GM12878 (cell line): ENCODE measurements at regions of chr10 and their contacts with region 1.

Region 1: GRCh38 chr10:77173615-77174461 is 463.8 kb downstream of the KCNMA1 start:
- DNase-seq: peak; percentile 28
- ATAC-seq: peak; percentile 84
- H3K4me3 ChIP-seq: no peak overlapping the region
- H3K27ac ChIP-seq: no peak overlapping the region
- H3K4me1 ChIP-seq: no peaks in the 10 kb centered on the region
- H3K27me3 ChIP-seq: no peaks in the 10 kb centered on the region
- CTCF ChIP-seq: peak; percentile 80 to 96 (median 81); a peak in 5 of 6 replicates
- EP300 ChIP-seq: no peak
- POLR2A ChIP-seq: no peak
- RAD21 ChIP-seq: peak; percentile 96

Region 2: DNA sequence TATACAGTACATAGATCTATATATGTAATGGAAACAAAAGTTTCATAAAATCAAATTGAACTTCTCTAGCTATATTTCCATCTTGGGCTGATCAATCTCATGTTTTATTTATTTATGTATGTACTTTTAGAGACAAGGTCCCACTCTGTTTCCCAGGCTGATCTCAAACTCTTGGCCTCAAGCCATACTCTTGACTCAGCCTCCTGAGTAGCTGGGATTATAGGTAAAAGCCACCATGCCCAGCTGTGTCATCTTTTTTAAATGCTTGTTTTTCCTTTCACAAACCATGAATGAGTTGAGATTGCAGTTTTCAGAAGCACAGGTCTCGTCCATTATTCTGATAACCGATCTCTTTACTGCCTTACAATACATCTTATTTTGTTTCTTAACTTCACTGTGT is 62.9 kb after region 1 on chr10:
- CTCF ChIA-PET with region 1: interaction called, 66 read pairs
- POLR2A ChIA-PET with region 1: no interaction called
- RAD21 ChIA-PET with region 1: interaction called, 44 read pairs
- SMC1A ChIA-PET with region 1: interaction called, 27 read pairs
- in situ Hi-C with region 1: no loop called
- intact Hi-C with region 1: no loop called
- DNase-seq: no peak
- ATAC-seq: no peak
- H3K4me3 ChIP-seq: no peak overlapping the region
- H3K27ac ChIP-seq: no peak overlapping the region
- H3K4me1 ChIP-seq: no peaks in the 10 kb centered on the region
- H3K27me3 ChIP-seq: no peaks in the 10 kb centered on the region
- CTCF ChIP-seq: no peak
- EP300 ChIP-seq: no peak
- POLR2A ChIP-seq: no peak
- RAD21 ChIP-seq: no peak

Region 3: GRCh38 chr10:77251297-77252013 is 77.6 kb after region 1 on chr10:
- CTCF ChIA-PET with region 1: interaction called, 27 read pairs
- POLR2A ChIA-PET with region 1: no interaction called
- RAD21 ChIA-PET with region 1: interaction called, 44 read pairs
- SMC1A ChIA-PET with region 1: interaction called, 106 read pairs
- in situ Hi-C with region 1: no loop called
- intact Hi-C with region 1: no loop called
- DNase-seq: no peak
- ATAC-seq: peak; percentile 94
- H3K4me3 ChIP-seq: no peak overlapping the region
- H3K27ac ChIP-seq: no peak overlapping the region
- H3K4me1 ChIP-seq: no peaks in the 10 kb centered on the region
- H3K27me3 ChIP-seq: no peaks in the 10 kb centered on the region
- CTCF ChIP-seq: peak; percentile 59 to 76 (median 64)
- EP300 ChIP-seq: no peak
- POLR2A ChIP-seq: no peak
- RAD21 ChIP-seq: peak; percentile 66

Region 4: DNA sequence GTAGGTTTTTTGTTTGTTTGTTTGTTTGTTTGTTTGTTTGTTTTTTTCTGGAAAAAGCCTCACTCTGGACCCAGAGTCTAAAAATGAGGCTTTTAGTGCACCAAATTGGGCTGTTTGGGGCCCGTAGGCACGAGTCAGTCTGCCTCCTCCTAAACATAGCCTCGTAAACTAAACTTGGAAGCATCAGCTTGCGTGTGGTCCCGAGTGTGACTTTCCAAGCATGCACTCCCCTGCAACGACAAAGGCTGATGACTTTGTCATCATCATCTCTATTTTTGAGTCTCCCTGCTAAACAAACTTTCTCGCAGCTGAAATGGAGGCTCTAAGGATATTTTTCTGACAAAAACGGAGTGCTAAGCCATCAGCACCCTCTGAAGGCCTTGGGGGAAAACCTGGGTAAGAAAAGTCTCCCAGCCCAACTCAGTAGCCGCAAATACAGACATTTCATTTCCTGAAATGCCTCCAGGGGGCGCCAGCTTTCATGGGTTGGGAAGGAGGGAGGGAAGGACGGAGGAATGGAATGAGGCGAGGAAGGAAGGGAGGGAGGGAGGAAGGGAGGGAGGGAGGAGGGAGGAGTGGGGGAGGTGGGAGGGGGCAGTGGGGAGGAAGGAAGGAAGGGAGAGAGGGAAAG is 217.9 kb after region 1 on chr10:
- CTCF ChIA-PET with region 1: interaction called, 53 read pairs
- POLR2A ChIA-PET with region 1: no interaction called
- RAD21 ChIA-PET with region 1: interaction called, 10 read pairs
- SMC1A ChIA-PET with region 1: interaction called, 50 read pairs
- in situ Hi-C with region 1: no loop called
- intact Hi-C with region 1: loop called (anchors 1 kb)
- DNase-seq: no peak
- ATAC-seq: peak; percentile 84
- H3K4me3 ChIP-seq: no peak overlapping the region
- H3K27ac ChIP-seq: no peak overlapping the region
- H3K4me1 ChIP-seq: no peaks in the 10 kb centered on the region
- H3K27me3 ChIP-seq: no peaks in the 10 kb centered on the region; a peak in 1 of 4 replicates
- CTCF ChIP-seq: peak; percentile 51 to 73 (median 72)
- EP300 ChIP-seq: no peak
- POLR2A ChIP-seq: no peak
- RAD21 ChIP-seq: peak; percentile 87

Region 5: GRCh38 chr10:77494327-77494726 is 320.5 kb after region 1 on chr10:
- CTCF ChIA-PET with region 1: no interaction called
- POLR2A ChIA-PET with region 1: no interaction called
- RAD21 ChIA-PET with region 1: interaction called, 3 read pairs
- SMC1A ChIA-PET with region 1: interaction called, 5 read pairs
- in situ Hi-C with region 1: no loop called
- intact Hi-C with region 1: loop called (anchors 5 kb)
- DNase-seq: no peak
- ATAC-seq: peak; percentile 13
- H3K4me3 ChIP-seq: no peak overlapping the region
- H3K27ac ChIP-seq: no peak overlapping the region
- H3K4me1 ChIP-seq: peaks cover 14% of the 10 kb centered on the region
- H3K27me3 ChIP-seq: no peaks in the 10 kb centered on the region
- CTCF ChIP-seq: 0 out of 6 replicates have a peak, but pooled peaks of 1 of the 3 experiments have one; percentile 4
- EP300 ChIP-seq: no peak
- POLR2A ChIP-seq: no peak
- RAD21 ChIP-seq: no peak